Gastrocnemius medialis (tissue), 4 donors: ENCODE measurements at regions of chr3 and their contacts with region 1.

Region 1: GRCh38 chr3:185362850-185363661 is at the start of gene MAP3K13:
- DNase-seq: peak; percentile 76 to 83
- ATAC-seq: peak; percentile 99
- H3K4me3 ChIP-seq: peak within 1 kb of the TSS; percentile 66 to 71 (median 68)
- H3K27ac ChIP-seq: peak within 1 kb of the TSS; percentile 68 to 83 (median 80)
- H3K4me1 ChIP-seq: peaks cover 9 to 29% of the 10 kb centered on the region in 2 donors
- H3K27me3 ChIP-seq: no peaks in the 10 kb centered on the region
- CTCF ChIP-seq: no peak
- POLR2A ChIP-seq: no peak
- total RNA-seq, gene MAP3K13: 1.6 to 6.5 (median 4.6) TPM

Region 2: DNA sequence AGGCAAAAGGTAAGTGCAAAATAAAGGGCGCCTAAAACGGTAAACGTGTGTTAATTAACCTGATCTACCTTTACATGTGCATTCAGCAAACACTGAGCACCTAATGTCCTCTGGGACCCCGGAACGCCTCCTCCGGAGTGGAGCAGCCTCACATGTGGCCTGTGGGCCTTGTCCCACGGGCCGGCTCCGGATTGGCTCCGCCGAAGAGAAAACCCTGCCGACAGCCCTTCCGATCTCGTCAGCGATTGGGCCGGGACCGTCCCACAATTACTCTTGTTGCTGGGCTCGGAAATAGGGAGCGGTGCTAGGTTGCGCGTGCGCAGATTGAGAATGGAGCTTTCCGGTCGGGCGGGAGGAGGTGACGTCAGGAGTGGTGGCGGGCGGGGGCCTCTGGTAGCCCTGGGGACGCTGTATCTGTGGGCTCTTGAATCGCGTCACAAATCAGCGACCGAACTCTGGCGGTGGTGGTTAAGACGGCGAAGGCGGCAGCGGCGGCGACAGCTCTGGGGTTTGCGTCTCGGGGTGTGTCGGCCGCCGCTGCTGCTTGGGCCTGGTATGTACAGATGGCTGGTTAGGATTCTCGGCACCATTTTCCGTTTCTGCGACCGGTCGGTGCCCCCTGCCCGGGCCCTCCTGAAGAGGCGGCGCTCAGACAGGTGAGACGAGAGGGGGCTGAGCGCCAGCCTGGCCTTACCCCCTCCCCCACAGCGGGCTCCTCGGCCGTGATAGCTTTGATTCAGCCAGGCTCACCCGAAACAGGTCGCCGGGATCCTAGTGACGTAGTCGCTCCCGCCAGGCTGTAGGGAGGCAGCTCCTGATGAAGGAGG is 223.0 kb after region 1 on chr3 and contains the start of gene SENP2:
- in situ Hi-C with region 1: no loop called
- intact Hi-C with region 1: loop called (anchors 10 kb)
- DNase-seq: peak; percentile 99
- ATAC-seq: peak; percentile 99
- H3K4me3 ChIP-seq: peak within 1 kb of the TSS; percentile 79 to 98 (median 89)
- H3K27ac ChIP-seq: peak within 1 kb of the TSS; percentile 93 to 95 (median 94)
- H3K4me1 ChIP-seq: peaks cover 14 to 25% of the 10 kb centered on the region in 2 donors
- H3K27me3 ChIP-seq: no peaks in the 10 kb centered on the region
- CTCF ChIP-seq: no peak
- POLR2A ChIP-seq: peak; percentile 77 to 80
- total RNA-seq, gene SENP2: 18.6 to 34.9 (median 31.3) TPM